ENCODE measurements at regions of chr11 and their contacts with region 1.

Region 1: DNA sequence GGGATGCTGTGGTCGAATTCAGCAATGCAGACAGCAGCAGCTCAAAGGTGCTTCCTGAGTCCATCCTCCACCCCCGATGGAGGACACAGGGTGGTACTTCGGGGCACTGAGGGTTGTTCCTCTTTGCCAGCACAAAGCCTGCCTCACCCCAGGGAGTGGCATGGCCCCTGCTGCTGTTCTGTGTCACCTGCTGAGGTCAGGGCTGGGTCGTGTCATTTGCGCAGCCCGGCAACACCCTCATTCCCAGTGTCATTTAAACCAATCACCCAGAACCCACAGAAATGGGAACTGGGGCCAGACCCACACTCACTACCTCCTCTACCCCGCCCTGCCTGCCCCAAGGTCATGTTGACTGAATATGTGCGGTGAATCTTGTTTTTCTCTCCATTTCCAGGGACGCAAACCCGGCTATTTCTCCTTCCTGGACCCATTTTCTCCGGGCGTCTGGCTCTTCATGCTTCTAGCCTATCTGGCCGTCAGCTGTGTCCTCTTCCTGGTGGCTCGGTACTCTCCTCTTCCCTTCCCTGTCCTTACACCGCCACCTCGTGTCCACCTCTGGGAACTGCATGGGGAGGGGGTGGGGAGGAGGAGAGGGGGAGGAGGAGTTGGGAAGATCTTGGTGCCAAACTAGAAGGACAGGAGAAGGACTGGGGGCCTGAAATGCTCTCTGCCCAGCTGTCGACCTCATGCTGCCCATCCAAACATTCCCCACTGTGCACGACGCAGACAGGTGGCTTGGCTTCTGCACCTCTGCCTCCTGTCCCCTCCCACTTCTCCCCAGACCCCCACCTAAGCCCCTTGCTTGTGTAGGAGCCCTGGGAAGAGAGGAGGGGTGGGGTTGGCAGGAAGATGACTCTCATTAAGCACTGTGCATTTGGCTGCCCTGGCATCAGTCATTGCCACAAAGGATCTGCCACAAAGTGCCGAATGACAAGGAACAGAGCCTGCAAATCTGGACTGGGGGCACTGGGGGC is 71.2 kb upstream of the TBCEL start:
- DNase-seq: peak; percentile 79 to 81
- ATAC-seq: peak; percentile 89 to 96 (median 94)
- H3K4me3 ChIP-seq: peak overlapping the region in 4 of 10 donors; percentile 23 to 32 (median 26)
- H3K27ac ChIP-seq: peak overlapping the region in 2 of 10 donors; percentile 28 to 44
- H3K4me1 ChIP-seq: peaks cover 0 to 10% (median 6%) of the 10 kb centered on the region in 9 donors
- H3K27me3 ChIP-seq: peaks cover 0 to 28% (median 24%) of the 10 kb centered on the region in 7 donors
- CTCF ChIP-seq: peak; percentile 39 to 77 (median 71)

Region 2: DNA sequence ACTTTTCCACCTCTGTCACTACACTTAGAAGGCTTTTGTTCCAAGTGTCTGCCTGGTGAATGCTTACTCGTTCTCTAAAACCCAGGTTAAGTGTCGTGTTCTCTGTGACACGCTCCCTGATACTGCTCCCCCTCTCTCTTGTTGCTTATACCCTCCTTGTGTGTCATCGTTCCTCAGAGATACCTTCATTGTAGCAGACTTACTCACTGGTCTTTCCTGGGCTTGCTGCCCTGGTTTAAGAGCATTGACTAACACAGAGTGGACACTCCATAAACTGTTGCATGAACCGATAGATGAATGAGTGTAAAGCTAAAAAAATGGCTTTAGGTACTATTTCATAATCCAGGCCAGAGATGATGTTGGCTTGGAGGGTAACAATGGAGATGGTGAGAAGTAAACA is 269.9 kb before region 1 on chr11:
- intact Hi-C with region 1: loop called in 3 of 10 experiments (anchors 5 to 10 kb)
- DNase-seq: no peak
- ATAC-seq: no peak
- H3K4me3 ChIP-seq: no peak overlapping the region
- H3K27ac ChIP-seq: no peak overlapping the region
- H3K4me1 ChIP-seq: no peaks in the 10 kb centered on the region
- H3K27me3 ChIP-seq: peaks cover 3 to 68% (median 41%) of the 10 kb centered on the region in 7 donors
- CTCF ChIP-seq: no peak

Region 3: DNA sequence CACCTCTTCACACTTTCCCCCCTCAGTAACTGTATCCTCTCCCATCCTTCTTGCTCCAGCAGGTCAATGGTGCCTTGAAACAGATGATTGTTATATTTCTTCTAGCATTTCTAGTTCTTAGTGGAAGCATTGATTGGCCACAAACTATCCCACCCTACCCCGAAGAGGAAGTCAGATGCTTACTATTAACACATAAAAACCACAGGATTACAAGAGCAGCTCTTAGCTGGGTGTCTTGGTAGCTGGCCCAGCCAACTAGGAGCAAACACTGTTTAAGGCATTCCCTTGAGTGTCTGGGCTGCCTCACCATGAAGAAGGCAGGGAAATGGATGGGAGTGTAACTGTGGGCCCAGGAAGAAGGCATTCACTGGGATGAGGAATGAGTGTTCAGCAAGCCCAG is 264.6 kb before region 1 on chr11:
- intact Hi-C with region 1: loop called in 3 of 10 experiments (anchors 5 to 10 kb)
- DNase-seq: no peak
- ATAC-seq: no peak
- H3K4me3 ChIP-seq: no peak overlapping the region
- H3K27ac ChIP-seq: no peak overlapping the region
- H3K4me1 ChIP-seq: no peaks in the 10 kb centered on the region
- H3K27me3 ChIP-seq: peaks cover 0 to 56% (median 34%) of the 10 kb centered on the region in 7 donors
- CTCF ChIP-seq: no peak

Region 4: DNA sequence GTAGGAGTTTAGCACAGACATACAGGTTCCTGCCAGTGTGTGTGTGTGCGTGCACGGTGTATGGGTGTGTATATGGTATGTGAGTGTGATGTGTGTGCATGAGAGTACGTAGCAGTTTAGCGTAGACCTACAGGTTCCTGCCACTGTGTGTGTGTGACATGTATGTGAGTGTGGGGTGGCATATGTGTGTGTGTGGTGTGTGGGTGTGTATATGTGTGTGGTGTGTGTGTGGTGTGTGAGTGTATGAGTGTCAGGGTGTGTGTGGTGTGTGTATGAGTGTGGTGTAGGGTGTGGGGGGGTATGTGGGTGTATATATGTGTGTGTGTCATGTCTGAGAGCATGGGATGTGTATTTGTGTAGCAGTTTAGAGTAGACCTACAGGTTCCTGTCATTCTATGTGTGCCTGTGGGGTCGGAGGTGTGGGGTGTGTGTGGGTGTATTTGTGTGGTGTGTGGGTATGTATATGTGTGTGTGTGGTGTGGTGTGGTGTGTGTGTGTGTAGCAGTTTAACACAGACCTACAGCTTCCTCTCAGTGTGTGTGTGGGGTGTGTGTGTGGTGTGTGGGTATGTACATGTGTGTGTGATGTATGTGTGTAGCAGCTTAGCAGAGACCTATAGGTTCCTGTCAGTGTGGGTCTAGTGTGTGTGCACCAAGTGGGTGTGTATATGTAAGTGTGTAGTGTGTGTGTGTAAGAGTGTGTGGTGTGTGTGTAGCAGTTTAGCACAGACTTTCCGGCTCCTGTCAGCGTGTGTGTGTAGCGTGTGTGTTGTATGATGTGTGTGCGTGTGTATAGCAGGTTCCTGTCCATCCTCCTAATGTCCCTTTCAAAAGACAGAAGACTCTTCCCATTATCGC is 39.3 kb after region 1 on chr11:
- intact Hi-C with region 1: no loop called
- DNase-seq: no peak
- ATAC-seq: no peak
- H3K4me3 ChIP-seq: no peak overlapping the region
- H3K27ac ChIP-seq: no peak overlapping the region
- H3K4me1 ChIP-seq: no peaks in the 10 kb centered on the region
- H3K27me3 ChIP-seq: peaks cover 0 to 30% (median 6%) of the 10 kb centered on the region in 7 donors
- CTCF ChIP-seq: no peak

Region 5: DNA sequence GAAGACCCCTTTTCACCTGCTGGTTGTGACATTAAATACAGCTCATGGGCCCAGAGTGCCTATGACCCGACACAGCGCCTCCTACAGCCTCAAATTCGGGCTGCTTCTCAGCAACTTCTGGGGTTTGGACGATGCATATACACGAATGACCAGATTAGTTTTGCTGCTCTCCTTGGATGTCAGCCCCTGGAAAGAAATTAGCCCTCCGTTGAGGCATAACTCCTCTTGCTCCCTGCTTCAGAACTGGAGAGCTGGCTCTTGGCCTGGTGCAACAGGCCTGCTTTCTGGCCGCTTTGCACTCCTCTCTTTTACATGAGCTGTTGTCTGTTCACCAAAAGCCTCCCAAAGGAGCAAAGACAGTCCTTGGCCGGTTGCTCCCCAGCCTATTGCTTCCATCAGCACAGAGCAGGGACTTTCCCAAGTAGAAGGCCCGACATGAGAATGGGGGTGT is 151.6 kb after region 1 on chr11:
- intact Hi-C with region 1: loop called in 1 of 10 experiments (anchors 10 kb)
- DNase-seq: peak; percentile 22 to 32
- ATAC-seq: peak in 7 of 8 donors; percentile 25 to 80 (median 66)
- H3K4me3 ChIP-seq: no peak overlapping the region
- H3K27ac ChIP-seq: peak overlapping the region in 3 of 10 donors; percentile 23 to 41 (median 31)
- H3K4me1 ChIP-seq: peaks cover 0 to 23% (median 14%) of the 10 kb centered on the region in 9 donors
- H3K27me3 ChIP-seq: no peaks in the 10 kb centered on the region
- CTCF ChIP-seq: peak in 2 of 9 donors; percentile 6 to 19

Region 6: GRCh38 chr11:121112498-121113455 is 160.0 kb after region 1 on chr11:
- intact Hi-C with region 1: loop called in 3 of 10 experiments (anchors 2 to 10 kb)
- DNase-seq: peak; percentile 48 to 69
- ATAC-seq: peak; percentile 83 to 95 (median 90)
- H3K4me3 ChIP-seq: no peak overlapping the region
- H3K27ac ChIP-seq: no peak overlapping the region
- H3K4me1 ChIP-seq: peaks cover 0 to 19% (median 7%) of the 10 kb centered on the region in 9 donors
- H3K27me3 ChIP-seq: peaks cover 0 to 21% (median 0%) of the 10 kb centered on the region in 7 donors
- CTCF ChIP-seq: peak; percentile 37 to 76 (median 66)

Measured in heart right ventricle (tissue), 16 donors.